ENCODE measurements at regions of chr9 and their contacts with region 1.

Region 1: GRCh38 chr9:34899535-34900158 is 58.4 kb upstream of the PHF24 start:
- DNase-seq: peak; percentile 54 to 74
- ATAC-seq: peak; percentile 100
- H3K4me3 ChIP-seq: no peak overlapping the region
- H3K27ac ChIP-seq: no peak overlapping the region
- H3K4me1 ChIP-seq: no peaks in the 10 kb centered on the region
- H3K27me3 ChIP-seq: peaks cover 5 to 10% (median 9%) of the 10 kb centered on the region in 3 donors
- CTCF ChIP-seq: peak; percentile 83 to 86 (median 83)
- POLR2A ChIP-seq: no peak

Region 2: DNA sequence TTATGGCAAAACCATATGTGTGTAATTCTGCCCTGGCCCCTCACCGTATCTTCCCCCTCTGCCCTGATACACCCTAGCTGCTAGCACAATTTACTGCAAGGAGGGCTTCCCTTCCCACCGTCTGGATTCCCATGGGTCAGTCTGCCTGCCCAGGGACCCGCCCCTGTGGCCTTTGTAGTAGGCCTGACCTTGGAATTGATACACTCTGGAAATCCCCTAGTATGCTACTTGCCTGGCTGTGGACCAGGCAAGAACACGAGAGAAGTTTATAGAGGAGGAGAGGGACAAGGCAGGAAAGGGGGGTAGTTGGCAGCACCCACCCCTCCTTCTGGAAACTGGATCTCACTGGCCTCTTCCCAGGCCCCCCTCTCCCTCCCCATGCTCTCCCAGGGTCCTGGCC is 73.9 kb before region 1 on chr9:
- in situ Hi-C with region 1: no loop called
- intact Hi-C with region 1: no loop called
- DNase-seq: no peak
- ATAC-seq: no peak
- H3K4me3 ChIP-seq: no peak overlapping the region
- H3K27ac ChIP-seq: no peak overlapping the region
- H3K4me1 ChIP-seq: no peaks in the 10 kb centered on the region
- H3K27me3 ChIP-seq: no peaks in the 10 kb centered on the region
- CTCF ChIP-seq: no peak
- POLR2A ChIP-seq: no peak

Region 3: DNA sequence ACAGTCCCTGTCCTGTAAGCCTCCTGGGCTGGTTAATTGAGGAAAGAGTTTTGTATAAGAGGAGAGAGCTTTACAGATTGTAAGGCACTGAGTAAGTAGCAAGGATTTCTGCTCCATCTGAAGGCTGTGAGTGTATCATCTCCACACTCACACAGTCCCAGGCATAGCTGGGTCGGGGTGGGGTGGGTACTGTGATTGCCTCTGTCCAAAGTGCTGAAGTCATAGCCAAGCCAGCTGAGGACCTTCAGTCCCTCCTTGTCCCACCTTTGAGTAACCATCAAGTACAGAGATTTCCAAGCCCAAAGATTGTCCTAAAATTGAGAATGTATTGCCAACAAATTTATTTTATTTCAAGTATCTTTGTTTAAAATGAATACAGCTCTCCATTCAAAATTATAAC is 84.4 kb after region 1 on chr9:
- in situ Hi-C with region 1: loop called in 1 of 4 experiments (anchors 5 kb)
- intact Hi-C with region 1: loop called (anchors 1 kb)
- DNase-seq: no peak
- ATAC-seq: no peak
- H3K4me3 ChIP-seq: no peak overlapping the region
- H3K27ac ChIP-seq: no peak overlapping the region
- H3K4me1 ChIP-seq: peaks cover 0 to 8% of the 10 kb centered on the region in 2 donors
- H3K27me3 ChIP-seq: no peaks in the 10 kb centered on the region
- CTCF ChIP-seq: no peak
- POLR2A ChIP-seq: no peak

Region 4: DNA sequence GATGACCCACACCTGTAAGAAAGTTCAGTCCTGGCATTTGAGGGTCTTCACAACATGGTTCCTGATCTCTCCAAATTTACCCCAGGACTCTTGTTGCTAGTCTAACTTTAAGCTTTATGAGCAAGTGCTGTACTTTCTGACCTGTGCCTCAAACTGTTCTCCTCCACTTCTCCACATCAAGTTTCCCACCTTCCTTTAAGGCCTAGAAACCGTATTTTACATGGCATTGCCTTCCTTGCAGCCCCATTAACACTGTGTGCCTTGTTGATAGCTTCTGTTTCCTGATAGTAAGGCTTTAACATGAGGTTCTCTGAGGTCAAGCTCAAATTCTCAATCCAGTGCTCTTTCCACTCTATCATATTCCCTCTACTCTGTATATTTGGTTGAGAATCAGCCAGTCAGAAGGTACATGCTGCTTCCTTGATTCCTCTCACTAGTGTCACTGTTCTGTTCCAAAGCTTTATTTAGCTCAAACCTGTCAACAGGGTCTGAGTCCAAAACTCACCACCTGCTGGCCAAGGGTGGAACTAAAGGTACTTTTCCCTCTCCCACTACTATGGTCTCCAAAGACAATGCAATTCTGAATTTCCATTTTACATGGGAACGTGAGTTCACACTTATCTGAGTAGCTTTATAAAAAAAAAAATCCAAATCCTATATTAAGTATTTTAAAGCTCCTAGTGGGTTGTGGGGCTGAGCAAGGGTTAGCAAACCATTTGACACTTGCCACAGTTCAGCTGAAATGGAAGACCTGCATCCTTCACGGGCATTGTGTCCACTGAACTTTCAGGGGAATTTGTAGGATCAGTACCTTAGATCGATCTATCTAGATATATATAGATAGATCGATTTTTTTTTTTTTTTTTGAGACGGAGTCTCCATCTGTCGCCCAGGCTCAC is 151.7 kb after region 1 on chr9:
- in situ Hi-C with region 1: loop called in 1 of 4 experiments (anchors 10 kb)
- intact Hi-C with region 1: loop called (anchors 1 kb)
- DNase-seq: peak; percentile 52 to 66
- ATAC-seq: peak; percentile 98 to 99
- H3K4me3 ChIP-seq: no peak overlapping the region
- H3K27ac ChIP-seq: peak overlapping the region; percentile 74 to 91 (median 82)
- H3K4me1 ChIP-seq: peaks cover 6 to 10% of the 10 kb centered on the region in 2 donors
- H3K27me3 ChIP-seq: no peaks in the 10 kb centered on the region
- CTCF ChIP-seq: peak; percentile 76 to 85 (median 82)
- POLR2A ChIP-seq: no peak

Region 5: GRCh38 chr9:35258676-35259474 is 359.2 kb after region 1 on chr9:
- in situ Hi-C with region 1: no loop called
- intact Hi-C with region 1: loop called (anchors 10 kb)
- DNase-seq: peak; percentile 46 to 70
- ATAC-seq: peak; percentile 84 to 89
- H3K4me3 ChIP-seq: no peak overlapping the region
- H3K27ac ChIP-seq: peak overlapping the region in 3 of 4 donors; percentile 3 to 47 (median 25)
- H3K4me1 ChIP-seq: peaks cover 10 to 17% of the 10 kb centered on the region in 2 donors
- H3K27me3 ChIP-seq: no peaks in the 10 kb centered on the region
- CTCF ChIP-seq: peak; percentile 53 to 76 (median 69)
- POLR2A ChIP-seq: no peak

Region 6: GRCh38 chr9:35481347-35481975 is 581.8 kb after region 1 on chr9:
- in situ Hi-C with region 1: no loop called
- intact Hi-C with region 1: loop called (anchors 2 kb)
- DNase-seq: peak; percentile 27 to 71
- ATAC-seq: peak; percentile 68 to 78
- H3K4me3 ChIP-seq: no peak overlapping the region
- H3K27ac ChIP-seq: no peak overlapping the region
- H3K4me1 ChIP-seq: no peaks in the 10 kb centered on the region
- H3K27me3 ChIP-seq: no peaks in the 10 kb centered on the region
- CTCF ChIP-seq: peak; percentile 74 to 89 (median 78)
- POLR2A ChIP-seq: no peak